Esophagus muscularis mucosa (tissue), 4 donors: ENCODE measurements at regions of chr11 and their contacts with region 1.

Region 1: DNA sequence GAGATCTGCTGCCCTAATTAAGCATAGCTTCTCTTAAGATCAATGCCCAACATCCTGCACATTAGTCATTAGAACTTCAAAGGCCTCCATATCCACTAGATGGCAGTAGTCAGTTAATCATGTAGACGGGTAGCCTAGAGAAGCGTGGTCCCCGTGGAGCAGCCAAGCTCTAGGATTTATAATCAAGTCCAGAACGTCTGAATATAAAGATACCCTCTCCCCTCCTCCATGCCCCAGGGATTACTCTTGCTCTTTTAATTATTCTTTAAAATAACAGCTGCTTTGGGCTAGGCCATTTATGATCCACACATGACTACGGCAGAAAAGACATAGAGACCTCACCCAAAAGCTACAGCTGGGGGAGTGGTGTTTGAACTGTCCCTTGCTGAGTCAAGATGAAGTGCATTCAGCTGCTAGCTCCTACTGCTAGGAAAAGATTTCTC is 327.6 kb upstream of the PLET1 start:
- DNase-seq: peak; percentile 92
- H3K4me3 ChIP-seq: no peak overlapping the region
- H3K27ac ChIP-seq: peak overlapping the region in 2 of 4 donors; percentile 32 to 49
- H3K4me1 ChIP-seq: peaks cover 3 to 42% (median 17%) of the 10 kb centered on the region in 4 donors
- H3K27me3 ChIP-seq: no peaks in the 10 kb centered on the region
- CTCF ChIP-seq: peak; percentile 69 to 77 (median 76)
- EP300 ChIP-seq: no peak
- POLR2A ChIP-seq: no peak

Region 2: GRCh38 chr11:112795142-112795815 is 207.0 kb after region 1 on chr11:
- intact Hi-C with region 1: loop called (anchors 5 kb)
- DNase-seq: no peak
- H3K4me3 ChIP-seq: no peak overlapping the region
- H3K27ac ChIP-seq: peak overlapping the region; percentile 74 to 82 (median 74)
- H3K4me1 ChIP-seq: peaks cover 25 to 50% (median 46%) of the 10 kb centered on the region in 4 donors
- H3K27me3 ChIP-seq: no peaks in the 10 kb centered on the region
- CTCF ChIP-seq: peak; percentile 59 to 77 (median 72)
- EP300 ChIP-seq: no peak
- POLR2A ChIP-seq: no peak

Region 3: GRCh38 chr11:112961146-112961668 is 372.9 kb after region 1 on chr11 and contains the start of gene NCAM1:
- intact Hi-C with region 1: loop called (anchors 10 kb)
- DNase-seq: no peak
- H3K4me3 ChIP-seq: peak within 1 kb of the TSS; percentile 75 to 81 (median 78)
- H3K27ac ChIP-seq: peak within 1 kb of the TSS; percentile 79 to 86 (median 82)
- H3K4me1 ChIP-seq: peaks cover 6 to 40% (median 31%) of the 10 kb centered on the region in 4 donors
- H3K27me3 ChIP-seq: peaks cover 0 to 21% (median 3%) of the 10 kb centered on the region in 4 donors
- CTCF ChIP-seq: no peak
- EP300 ChIP-seq: no peak
- POLR2A ChIP-seq: no peak
- total RNA-seq, gene NCAM1: 83.5 to 161 (median 95.2) TPM

Region 4: DNA sequence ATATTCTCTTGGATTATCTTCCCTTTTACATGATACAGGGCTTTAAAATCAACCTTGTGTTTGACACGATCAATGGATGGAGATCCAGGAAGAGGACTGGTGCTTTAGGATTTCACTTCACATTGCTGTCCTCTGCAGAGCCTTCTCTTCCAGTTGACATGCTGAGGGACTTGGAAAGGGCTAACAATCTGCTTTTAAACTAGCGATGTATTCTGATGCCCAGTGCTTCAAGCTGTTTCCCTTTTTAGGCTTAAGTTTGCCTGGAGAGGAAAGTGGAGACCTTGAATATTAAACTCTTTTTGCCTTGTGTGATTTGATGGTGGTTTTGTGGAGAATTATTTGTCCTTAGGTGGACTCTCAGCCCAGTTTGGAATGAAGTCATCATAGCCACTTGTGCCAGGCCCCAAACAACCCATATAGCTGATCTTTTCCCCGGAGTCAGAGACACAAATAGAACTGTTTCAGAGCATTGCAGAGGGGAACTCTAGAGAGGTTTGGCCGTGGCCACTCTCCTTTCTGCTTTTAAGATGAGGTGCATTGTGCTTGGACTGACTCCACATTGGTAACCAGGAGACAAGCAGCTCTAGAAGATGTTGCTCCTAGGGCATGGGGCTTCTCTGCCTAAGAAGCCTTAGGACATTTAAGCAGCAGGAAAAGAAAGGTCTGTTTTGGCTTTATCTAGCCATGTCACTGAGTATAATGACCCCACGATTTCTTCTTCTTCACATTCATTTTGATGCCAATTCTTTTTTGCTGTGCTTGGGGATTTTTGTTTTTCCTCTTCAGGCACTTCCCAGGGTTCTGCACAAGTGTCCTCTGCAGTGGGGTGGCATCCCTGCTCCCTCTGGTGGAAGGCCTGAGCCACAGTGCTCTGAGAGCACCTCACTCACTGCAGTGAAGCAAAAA is 525.8 kb after region 1 on chr11:
- intact Hi-C with region 1: loop called (anchors 1 kb)
- DNase-seq: no peak
- H3K4me3 ChIP-seq: no peak overlapping the region
- H3K27ac ChIP-seq: peak overlapping the region; percentile 47 to 73 (median 50)
- H3K4me1 ChIP-seq: peaks cover 31 to 49% (median 42%) of the 10 kb centered on the region in 4 donors
- H3K27me3 ChIP-seq: no peaks in the 10 kb centered on the region
- CTCF ChIP-seq: peak; percentile 71 to 79 (median 77)
- EP300 ChIP-seq: no peak
- POLR2A ChIP-seq: no peak

Region 5: GRCh38 chr11:113289431-113290187 is 701.3 kb after region 1 on chr11:
- intact Hi-C with region 1: loop called (anchors 2 kb)
- DNase-seq: no peak
- H3K4me3 ChIP-seq: no peak overlapping the region
- H3K27ac ChIP-seq: no peak overlapping the region
- H3K4me1 ChIP-seq: peaks cover 0 to 8% (median 0%) of the 10 kb centered on the region in 4 donors
- H3K27me3 ChIP-seq: peaks cover 0 to 13% (median 0%) of the 10 kb centered on the region in 4 donors
- CTCF ChIP-seq: peak; percentile 85 to 95 (median 88)
- EP300 ChIP-seq: no peak
- POLR2A ChIP-seq: no peak